OCI-LY7 (cell line): ENCODE measurements at regions of chr2 and their contacts with region 1.

Region 1: DNA sequence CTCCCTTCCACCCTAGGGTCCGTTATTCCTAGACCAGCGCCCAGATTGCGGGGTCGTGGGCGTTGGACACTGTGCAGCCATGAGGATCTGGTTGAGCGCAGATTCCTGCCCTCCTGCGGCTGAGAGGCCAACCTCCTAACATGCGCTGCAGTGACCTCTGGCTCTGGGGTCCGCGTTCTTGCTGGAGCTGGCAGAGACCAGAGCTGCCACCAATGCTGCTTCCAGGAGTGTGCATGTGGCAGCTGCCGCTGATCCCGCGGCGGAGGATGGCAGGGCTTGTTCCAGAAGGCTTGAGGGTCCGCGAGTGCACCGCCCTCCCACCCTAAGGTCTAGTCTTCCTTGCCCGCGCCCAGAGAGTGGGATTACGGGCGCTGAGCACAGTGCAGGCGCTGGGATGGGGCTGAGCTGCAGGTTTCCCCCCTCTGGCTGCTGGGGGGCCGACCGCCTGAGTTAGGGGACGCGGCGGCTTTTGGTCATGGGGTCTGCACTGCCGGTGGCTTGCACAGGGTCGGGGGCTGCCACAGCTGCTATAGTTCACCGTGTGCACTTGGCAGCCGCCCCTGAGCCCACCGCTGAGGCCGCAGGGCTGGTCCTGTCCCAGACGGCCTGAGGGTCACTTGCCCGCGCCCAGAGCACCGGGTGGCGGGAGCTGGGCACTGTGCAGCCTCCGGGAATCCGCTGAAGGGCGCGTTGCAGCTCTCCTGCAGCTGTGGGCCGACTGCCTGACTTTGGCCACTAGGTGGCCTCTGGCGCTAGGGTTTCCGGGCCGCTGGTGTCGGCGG is 145.9 kb downstream of the CCDC74A start:
- DNase-seq: peak; percentile 81
- H3K4me3 ChIP-seq: peak overlapping the region; percentile 62
- H3K27ac ChIP-seq: no peak overlapping the region
- H3K4me1 ChIP-seq: peaks cover 37% of the 10 kb centered on the region
- CTCF ChIP-seq: peak; percentile 81

Region 2: DNA sequence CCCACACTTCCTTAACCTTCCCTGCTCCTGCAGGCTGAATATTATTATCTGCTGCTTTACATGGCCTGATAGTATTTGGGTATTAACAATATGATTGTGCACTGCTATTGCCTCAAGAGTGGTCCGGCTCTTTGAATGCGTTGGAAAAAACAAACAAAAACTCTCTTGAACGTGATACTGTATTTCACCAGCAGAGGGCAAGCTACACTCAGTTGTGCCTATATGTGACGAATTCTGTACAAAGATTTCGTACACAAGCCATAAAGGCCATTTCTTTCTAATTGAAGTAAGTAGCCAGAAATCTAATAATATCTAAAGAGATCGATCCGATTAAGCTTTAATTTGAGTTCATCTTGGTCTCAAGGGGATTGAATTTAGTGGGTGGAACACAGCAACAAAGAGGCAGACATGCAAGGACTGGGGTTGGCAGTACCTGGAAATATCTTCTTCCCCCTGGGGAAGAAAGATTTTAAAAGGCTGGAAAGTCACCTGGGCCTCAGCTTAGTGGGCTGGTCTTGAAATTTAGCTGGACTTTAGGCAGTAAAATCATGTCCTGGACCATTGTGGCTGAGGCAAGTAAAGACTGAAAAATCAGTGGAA is 260.3 kb before region 1 on chr2:
- CTCF ChIA-PET with region 1: no interaction called
- POLR2A ChIA-PET with region 1: no interaction called
- intact Hi-C with region 1: loop called (anchors 1 kb)
- DNase-seq: peak; percentile 74
- H3K4me3 ChIP-seq: no peak overlapping the region
- H3K27ac ChIP-seq: no peak overlapping the region
- H3K4me1 ChIP-seq: no peaks in the 10 kb centered on the region
- CTCF ChIP-seq: peak; percentile 97

Region 3: DNA sequence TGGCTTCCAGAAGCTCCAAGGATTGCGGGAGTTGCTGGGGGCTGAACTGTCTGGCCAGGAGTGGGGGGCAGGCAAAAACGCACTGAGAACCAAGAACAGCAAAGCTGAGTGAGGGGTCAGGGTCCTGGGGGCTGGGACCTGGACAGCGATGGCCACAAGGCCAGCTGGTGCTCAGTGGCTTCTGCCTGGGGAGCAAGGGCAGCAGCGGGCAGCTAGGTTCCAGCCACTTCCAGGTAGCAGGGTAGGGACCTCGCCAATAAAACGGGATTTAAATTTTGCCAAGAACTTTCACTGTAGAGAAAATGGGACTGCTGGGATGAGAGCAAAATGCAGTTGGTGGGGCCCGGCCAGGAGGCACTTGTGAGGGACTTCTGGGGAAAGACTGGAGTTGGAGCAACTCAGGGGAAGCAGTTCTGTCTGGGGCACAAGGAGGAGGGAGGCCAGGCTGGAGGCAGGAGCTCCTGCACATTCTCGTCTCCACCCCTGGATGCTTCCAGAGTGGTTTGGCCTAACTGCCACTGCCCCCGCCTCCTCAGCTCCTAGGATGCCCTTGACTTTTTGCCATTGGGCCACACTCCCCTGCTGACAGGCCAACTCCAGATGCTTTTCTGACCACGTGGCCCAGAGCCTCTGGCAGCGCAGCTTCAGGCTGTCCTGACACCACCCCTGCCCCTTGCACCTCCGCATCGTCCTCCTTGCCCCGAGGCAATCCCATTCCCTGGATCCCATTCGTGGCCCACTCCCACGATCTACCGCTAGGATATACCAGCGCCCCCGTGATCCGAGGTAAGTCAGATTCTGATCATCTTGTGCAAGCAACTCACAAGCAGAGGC is 151.4 kb before region 1 on chr2:
- CTCF ChIA-PET with region 1: no interaction called
- POLR2A ChIA-PET with region 1: no interaction called
- intact Hi-C with region 1: loop called (anchors 10 kb)
- DNase-seq: no peak
- H3K4me3 ChIP-seq: no peak overlapping the region
- H3K27ac ChIP-seq: no peak overlapping the region
- H3K4me1 ChIP-seq: peaks cover 11% of the 10 kb centered on the region
- CTCF ChIP-seq: no peak

Region 4: GRCh38 chr2:131635611-131636010 is 38.0 kb before region 1 on chr2:
- CTCF ChIA-PET with region 1: no interaction called
- POLR2A ChIA-PET with region 1: no interaction called
- intact Hi-C with region 1: loop called (anchors 1 kb)
- DNase-seq: no peak
- H3K4me3 ChIP-seq: no peak overlapping the region
- H3K27ac ChIP-seq: no peak overlapping the region
- H3K4me1 ChIP-seq: peaks cover 6% of the 10 kb centered on the region
- CTCF ChIP-seq: no peak

Region 5: GRCh38 chr2:131724019-131724418 is 50.4 kb after region 1 on chr2:
- CTCF ChIA-PET with region 1: no interaction called
- POLR2A ChIA-PET with region 1: no interaction called
- intact Hi-C with region 1: no loop called
- DNase-seq: no peak
- H3K4me3 ChIP-seq: no peak overlapping the region
- H3K27ac ChIP-seq: no peak overlapping the region
- H3K4me1 ChIP-seq: no peaks in the 10 kb centered on the region
- CTCF ChIP-seq: no peak